ENCODE measurements at regions of chr11 and their contacts with region 1.

Region 1: DNA sequence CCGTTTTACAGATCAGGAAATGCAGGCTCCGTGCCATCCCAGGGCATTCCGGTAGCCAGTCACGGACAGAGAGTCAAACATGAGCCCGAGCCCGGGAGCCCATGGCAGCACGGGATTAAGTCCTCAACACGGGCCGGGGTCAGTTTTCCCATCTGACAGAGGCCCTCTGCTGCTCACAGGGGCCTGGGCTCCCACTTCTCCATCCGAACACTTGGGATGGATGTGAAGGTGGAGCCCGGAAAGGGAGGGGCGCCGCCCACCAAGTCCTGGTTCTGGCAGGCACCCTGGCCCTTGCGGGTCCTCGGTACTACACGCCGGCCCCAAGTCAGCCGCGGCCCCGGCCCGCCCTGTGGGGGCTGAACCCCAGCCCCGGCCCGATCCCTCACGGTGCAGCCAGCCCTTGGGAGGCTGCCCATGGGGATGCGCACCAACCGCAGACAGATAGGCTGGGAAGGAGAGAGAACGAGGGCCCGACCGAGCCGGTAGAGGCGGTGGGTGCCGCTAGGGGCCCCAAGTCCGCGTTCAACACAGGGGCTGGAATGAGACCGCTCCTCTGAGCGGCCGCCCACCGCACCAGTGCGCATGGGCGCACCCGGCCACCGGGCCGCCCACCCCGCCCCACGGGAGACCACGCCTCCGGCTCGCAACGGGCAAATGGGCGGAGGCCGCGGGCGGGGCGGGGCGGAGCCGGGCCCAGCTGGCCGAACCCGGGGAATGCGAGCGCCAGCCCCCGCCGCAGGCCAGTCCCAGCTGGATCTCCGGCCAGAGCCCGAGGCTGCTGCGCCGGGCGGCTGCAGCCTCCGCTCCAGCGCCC is at the start of gene CAPN5:
- DNase-seq: peak; percentile 74 to 97
- H3K4me3 ChIP-seq: peak within 1 kb of the TSS; percentile 71
- H3K27ac ChIP-seq: no peak within 1 kb of the TSS
- H3K4me1 ChIP-seq: peaks cover 10% of the 10 kb centered on the region
- H3K27me3 ChIP-seq: no peaks in the 10 kb centered on the region
- CTCF ChIP-seq: peak; percentile 50; the same call in 1 of the 2 replicates
- total RNA-seq, gene CAPN5: 9.9 and 10.5 TPM in 2 replicates

Region 2: GRCh38 chr11:77053217-77054015 is 13.0 kb before region 1 on chr11:
- CTCF ChIA-PET with region 1: interaction called, 3 read pairs
- POLR2A ChIA-PET with region 1: interaction called, 12 read pairs
- intact Hi-C with region 1: no loop called
- DNase-seq: no peak
- H3K4me3 ChIP-seq: no peak overlapping the region
- H3K27ac ChIP-seq: no peak overlapping the region
- H3K4me1 ChIP-seq: no peaks in the 10 kb centered on the region
- H3K27me3 ChIP-seq: 0 out of 2 replicates have a peak, but pooled peaks cover 11% of the 10 kb centered on the region
- CTCF ChIP-seq: no peak

Region 3: GRCh38 chr11:77080643-77081210 is 14.3 kb after region 1 on chr11:
- CTCF ChIA-PET with region 1: no interaction called
- POLR2A ChIA-PET with region 1: no interaction called
- intact Hi-C with region 1: no loop called
- DNase-seq: no peak
- H3K4me3 ChIP-seq: no peak overlapping the region
- H3K27ac ChIP-seq: no peak overlapping the region
- H3K4me1 ChIP-seq: peaks cover 4% of the 10 kb centered on the region
- H3K27me3 ChIP-seq: no peaks in the 10 kb centered on the region
- CTCF ChIP-seq: no peak

Region 4: DNA sequence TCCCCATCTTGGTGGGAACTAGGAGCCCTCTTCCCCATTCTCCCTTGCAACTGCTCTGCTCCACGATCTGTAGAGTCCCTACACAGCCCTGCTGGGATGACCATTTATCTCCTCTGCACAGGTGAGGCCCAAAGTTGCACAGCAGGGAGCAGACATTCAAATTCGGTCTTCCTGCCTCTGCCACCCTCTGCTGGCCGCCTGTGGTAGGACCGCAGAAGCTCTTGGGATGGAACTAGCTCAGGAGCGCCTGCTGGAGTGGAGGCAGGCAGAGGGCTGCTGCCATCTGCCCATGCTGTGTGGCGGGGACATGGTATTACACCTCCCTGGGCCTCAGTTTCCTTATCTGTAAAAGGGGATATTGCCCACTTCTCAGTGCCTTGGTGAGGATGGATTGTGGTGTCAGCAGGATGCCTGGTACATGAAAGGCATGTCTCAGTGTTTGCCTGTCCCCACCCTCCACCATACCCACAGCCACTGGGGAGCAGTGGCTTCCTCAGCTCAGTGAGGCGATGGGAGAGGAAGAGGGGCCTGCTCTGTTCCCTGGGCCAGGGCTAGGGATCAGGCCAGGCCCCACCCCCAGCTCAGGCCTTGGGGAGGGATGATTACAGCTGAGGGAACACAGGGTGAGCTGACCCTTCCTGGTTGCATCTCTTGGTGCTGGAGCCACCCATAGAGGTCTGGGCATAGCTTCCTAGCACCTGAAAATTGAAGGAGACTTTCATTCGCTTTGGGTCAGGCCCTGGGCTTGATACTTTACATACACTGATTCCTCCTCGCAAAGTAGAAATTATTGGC is 24.9 kb after region 1 on chr11:
- CTCF ChIA-PET with region 1: interaction called, 37 read pairs
- POLR2A ChIA-PET with region 1: interaction called, 5 read pairs
- intact Hi-C with region 1: loop called (anchors 1 kb)
- DNase-seq: peak; percentile 64 to 86
- H3K4me3 ChIP-seq: no peak overlapping the region
- H3K27ac ChIP-seq: no peak overlapping the region
- H3K4me1 ChIP-seq: peaks cover 47% of the 10 kb centered on the region
- H3K27me3 ChIP-seq: no peaks in the 10 kb centered on the region
- CTCF ChIP-seq: peak; percentile 99

Region 5: DNA sequence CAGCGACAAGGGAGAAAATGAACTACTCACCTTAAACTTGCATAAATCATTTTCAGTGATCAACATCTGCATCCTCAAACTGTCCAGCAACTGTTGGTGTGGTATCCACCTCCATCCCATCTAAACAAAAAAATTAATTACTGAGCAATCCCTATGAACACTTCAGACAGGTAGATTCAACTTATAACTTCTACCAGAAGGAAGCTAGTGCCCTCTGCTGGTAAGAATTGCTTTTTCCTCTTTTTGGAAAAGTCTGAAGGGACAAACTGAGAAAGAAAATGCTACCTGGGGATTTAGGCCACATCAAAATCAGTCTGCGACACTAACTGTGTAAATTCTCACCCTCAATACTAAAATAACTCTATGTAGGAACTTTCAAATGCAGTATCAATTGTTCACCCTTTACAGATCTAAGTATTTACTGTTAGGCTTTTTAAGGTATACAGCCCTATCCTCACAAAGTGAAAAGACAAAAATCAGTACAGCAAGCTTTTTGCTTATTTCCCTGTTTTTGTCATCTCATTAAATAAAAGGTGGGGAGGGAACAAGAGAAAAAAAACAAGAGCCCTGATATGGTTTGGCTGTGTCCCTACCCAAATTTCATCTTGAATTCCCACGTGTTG is 553.3 kb after region 1 on chr11:
- CTCF ChIA-PET with region 1: no interaction called
- POLR2A ChIA-PET with region 1: no interaction called
- intact Hi-C with region 1: loop called (anchors 5 kb)
- DNase-seq: peak; percentile 29 to 56
- H3K4me3 ChIP-seq: no peak overlapping the region
- H3K27ac ChIP-seq: no peak overlapping the region
- H3K4me1 ChIP-seq: no peaks in the 10 kb centered on the region
- H3K27me3 ChIP-seq: no peaks in the 10 kb centered on the region
- CTCF ChIP-seq: peak; percentile 96